ENCODE measurements at regions of chr11 and their contacts with region 1.

Region 1: DNA sequence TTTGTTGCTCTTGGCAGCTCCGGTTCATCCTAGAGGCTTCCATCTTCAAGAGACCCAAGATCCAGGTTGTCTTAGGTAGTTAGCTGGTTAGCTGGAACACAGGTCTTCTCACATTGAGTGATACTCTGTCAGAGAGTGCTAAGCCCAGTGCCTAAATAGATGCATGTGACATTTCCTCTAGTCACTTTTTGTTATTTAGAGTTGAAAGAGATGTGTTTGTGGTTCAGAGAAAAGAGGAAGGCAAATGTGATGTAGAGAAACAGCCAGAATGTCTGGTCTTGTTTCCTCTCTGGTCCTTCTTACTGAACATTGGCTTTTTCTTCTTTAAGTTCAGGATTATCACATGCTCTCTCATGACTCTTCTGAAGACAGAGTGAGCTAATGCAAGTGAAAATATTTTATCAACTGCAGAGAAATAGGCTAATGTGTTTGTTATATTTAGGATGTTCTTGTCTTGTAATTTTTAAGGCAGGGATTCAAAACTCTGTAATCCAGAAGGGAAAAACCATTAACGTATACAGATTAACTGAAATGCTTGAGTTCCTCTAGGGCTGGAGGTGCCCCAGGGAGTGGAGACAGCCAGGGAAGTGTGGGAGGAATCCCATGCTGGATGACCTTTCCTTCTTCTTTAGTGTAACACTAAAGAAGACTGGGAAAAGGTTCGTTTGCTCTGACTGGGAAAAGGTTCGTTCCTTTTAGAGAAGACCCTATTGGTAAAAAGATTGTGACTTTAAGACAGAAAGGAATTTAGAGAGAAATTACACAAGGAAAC is 75.4 kb downstream of the SWAP70 start:
- DNase-seq: no peak
- H3K4me3 ChIP-seq: no peak overlapping the region
- CTCF ChIP-seq: no peak
- POLR2A ChIP-seq: no peak

Region 2: DNA sequence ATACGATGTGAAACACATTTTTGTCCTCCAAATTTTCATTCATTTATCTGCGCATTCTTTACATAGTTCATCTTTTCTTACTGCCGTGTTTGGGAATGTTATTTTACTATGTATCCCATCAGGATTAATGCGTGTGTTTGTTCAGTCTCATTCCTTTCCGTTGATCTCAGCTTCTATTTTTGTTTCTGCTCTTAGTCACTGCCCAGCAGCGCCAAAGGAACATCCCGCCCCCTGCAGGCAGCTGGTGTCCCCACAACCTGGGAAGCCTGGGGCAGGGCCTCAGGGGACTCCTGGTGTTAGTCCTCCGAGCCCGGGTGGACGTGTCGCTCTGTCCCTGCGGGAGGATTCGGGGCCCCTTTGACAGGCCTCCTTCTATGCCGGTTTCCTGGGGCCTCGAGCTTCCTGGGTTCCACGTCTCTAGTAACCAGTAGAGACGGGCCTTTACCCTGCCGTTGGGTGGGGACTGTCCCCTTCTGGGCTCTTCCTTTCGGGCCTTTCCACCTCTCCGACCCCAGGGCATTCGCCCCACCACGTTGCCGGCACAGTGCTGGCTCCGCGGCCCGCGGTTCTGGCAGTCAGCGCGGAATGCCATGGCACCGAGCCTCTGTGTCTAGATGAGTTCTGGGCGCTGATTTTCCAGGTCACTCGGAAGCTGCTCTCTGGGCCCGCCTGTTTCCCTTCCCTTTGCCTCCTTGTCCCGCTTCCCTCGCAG is 126.0 kb before region 1 on chr11:
- intact Hi-C with region 1: loop called (anchors 5 kb)
- DNase-seq: peak; percentile 92 to 99
- H3K4me3 ChIP-seq: peak overlapping the region; percentile 27
- CTCF ChIP-seq: peak in 1 of 3 donors; percentile 86
- POLR2A ChIP-seq: no peak

Region 3: DNA sequence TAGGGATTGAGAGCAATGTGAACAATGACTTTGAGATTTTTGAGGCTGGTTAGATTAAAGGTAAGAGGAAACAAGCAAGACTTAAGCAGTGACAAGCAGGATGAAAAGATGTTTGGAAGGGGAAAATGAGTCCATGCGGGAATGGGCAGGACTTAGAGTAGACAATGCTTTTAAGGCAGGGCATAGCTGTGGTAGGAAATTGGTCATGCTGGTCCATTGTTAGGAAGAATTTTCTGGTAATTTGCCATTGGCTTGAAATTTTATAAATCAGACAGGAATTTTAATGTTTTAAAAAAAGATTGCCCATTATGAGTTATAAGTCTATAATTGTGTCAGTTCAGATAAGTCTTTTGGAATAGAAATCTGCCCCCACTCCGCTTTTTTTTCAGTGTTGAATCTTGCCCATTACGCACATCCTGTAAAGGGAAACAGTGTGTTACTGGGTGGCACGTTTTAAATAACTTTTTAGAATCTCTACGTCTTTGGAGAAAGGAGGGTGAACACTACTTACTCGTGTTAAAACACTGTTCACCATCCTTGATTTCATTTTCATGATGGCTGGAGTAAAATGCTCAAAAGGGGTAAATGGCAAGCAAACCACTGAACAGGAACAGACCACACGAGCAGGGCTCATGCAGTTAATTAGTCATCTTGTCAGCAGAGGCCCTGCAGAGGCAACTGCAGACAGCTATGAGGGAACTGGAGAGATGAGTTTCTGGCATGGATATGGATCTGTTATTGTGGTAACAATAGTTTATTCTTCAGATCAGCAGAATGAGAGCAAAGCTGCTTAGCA is 50.4 kb before region 1 on chr11:
- intact Hi-C with region 1: loop called (anchors 10 kb)
- DNase-seq: no peak
- H3K4me3 ChIP-seq: no peak overlapping the region
- CTCF ChIP-seq: no peak
- POLR2A ChIP-seq: no peak

Region 4: GRCh38 chr11:9787981-9788521 is 48.7 kb after region 1 on chr11:
- intact Hi-C with region 1: no loop called
- DNase-seq: no peak
- H3K4me3 ChIP-seq: no peak overlapping the region
- CTCF ChIP-seq: no peak
- POLR2A ChIP-seq: no peak

Measured in lower leg skin (tissue), 4 donors.